ENCODE measurements at regions of chr20 and their contacts with region 1.

Region 1: GRCh38 chr20:561437-562231 is 18.0 kb upstream of the CSNK2A1 start:
- DNase-seq: no peak
- H3K4me3 ChIP-seq: no peak overlapping the region
- H3K27ac ChIP-seq: no peak overlapping the region
- H3K4me1 ChIP-seq: peaks cover 0 to 10% (median 1%) of the 10 kb centered on the region in 4 donors
- H3K27me3 ChIP-seq: peaks cover 0 to 78% (median 4%) of the 10 kb centered on the region in 4 donors
- CTCF ChIP-seq: peak; percentile 88 to 99 (median 89)
- EP300 ChIP-seq: no peak
- POLR2A ChIP-seq: no peak

Region 2: DNA sequence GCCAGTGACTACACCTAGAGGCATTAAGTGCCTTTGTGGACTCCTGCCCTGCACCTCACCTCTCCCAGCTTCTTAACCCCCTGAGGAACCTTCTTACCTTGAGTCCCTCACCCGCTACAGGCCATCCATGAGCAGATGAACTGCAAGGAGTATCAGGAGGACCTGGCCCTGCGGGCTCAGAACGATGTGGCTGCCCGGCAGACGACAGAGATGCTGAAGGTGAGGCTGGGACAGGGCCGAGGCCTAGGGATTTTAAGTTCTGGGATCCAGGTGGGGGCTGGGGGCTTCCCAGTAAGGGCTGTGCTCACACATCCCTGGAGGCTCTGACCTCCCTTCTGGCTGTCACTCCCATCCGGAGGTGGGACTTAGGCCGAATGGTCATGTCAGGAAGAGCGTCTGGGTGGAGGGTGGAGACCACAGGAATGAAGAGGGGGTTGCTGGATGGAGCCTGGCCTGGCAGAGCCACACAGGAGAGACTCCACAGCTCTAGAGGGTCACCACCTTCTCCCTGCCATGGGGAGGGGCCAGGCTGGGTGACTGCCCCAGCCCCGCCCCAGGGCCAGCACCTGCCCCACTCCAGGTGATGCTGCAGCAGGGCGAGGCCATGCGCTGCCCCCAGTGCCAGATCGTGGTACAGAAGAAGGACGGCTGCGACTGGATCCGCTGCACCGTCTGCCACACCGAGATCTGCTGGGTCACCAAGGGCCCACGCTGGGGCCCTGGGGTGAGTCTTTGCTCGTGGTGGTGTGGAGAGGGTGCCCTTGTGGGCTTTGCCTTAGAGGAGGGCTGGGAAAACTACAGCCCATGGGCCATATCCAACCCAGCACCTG is 133.0 kb before region 1 on chr20:
- intact Hi-C with region 1: no loop called
- DNase-seq: no peak
- H3K4me3 ChIP-seq: no peak overlapping the region
- H3K27ac ChIP-seq: no peak overlapping the region
- H3K4me1 ChIP-seq: peaks cover 0 to 10% (median 0%) of the 10 kb centered on the region in 4 donors
- H3K27me3 ChIP-seq: no peaks in the 10 kb centered on the region
- CTCF ChIP-seq: no peak
- EP300 ChIP-seq: no peak
- POLR2A ChIP-seq: no peak

Region 3: DNA sequence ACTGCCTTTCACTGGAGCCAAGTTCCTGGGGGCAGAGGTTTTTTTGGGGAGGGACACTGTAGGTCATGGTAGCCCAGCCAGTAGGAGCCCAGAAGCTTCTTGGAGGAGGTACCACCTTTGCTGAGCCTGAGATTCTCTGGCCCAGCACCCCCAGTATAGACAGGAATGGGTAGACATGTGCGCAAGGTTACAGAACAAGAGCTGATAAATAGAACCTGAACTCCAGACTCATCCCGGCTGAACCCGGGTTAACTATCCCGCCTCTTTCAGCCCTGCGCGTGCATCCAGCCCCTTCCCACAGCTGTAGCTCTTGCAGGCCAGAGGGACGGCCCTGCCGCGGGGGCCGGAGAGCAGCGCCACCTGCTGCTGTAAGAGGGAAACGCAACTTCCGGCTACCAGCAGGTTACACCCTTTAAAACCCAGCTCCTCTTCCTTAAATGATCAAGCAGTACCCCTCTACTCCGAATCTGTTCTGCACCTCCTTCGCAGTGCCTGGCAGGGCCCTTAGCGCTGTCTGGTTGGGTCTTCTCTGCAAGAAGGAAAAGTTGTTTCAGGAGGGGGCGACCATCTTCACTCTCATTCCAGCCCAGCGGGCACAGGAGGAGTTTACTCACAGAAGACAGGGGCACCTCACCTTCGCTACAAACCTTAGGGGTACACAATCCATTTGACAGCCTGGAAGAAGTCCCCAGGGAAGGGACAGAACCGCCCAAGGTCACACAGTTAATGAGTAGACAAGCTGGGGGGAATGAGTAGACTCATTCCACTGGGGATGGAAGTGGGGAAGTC is 83.9 kb after region 1 on chr20:
- intact Hi-C with region 1: loop called (anchors 5 kb)
- DNase-seq: no peak
- H3K4me3 ChIP-seq: no peak overlapping the region
- H3K27ac ChIP-seq: no peak overlapping the region
- H3K4me1 ChIP-seq: peaks cover 15 to 29% (median 25%) of the 10 kb centered on the region in 4 donors
- H3K27me3 ChIP-seq: peaks cover 0 to 24% (median 9%) of the 10 kb centered on the region in 4 donors
- CTCF ChIP-seq: peak; percentile 78 to 94 (median 84)
- EP300 ChIP-seq: no peak
- POLR2A ChIP-seq: no peak

Region 4: GRCh38 chr20:667391-667964 is 105.8 kb after region 1 on chr20:
- intact Hi-C with region 1: loop called (anchors 5 kb)
- DNase-seq: no peak
- H3K4me3 ChIP-seq: no peak overlapping the region
- H3K27ac ChIP-seq: no peak overlapping the region
- H3K4me1 ChIP-seq: peaks cover 5 to 22% (median 7%) of the 10 kb centered on the region in 4 donors
- H3K27me3 ChIP-seq: peaks cover 0 to 97% (median 48%) of the 10 kb centered on the region in 4 donors
- CTCF ChIP-seq: peak; percentile 66 to 78 (median 67)
- EP300 ChIP-seq: no peak
- POLR2A ChIP-seq: no peak

Region 5: GRCh38 chr20:739736-740135 is 178.1 kb after region 1 on chr20:
- intact Hi-C with region 1: loop called (anchors 2 kb)
- DNase-seq: no peak
- H3K4me3 ChIP-seq: no peak overlapping the region
- H3K27ac ChIP-seq: no peak overlapping the region
- H3K4me1 ChIP-seq: no peaks in the 10 kb centered on the region
- H3K27me3 ChIP-seq: peaks cover 0 to 46% (median 0%) of the 10 kb centered on the region in 4 donors
- CTCF ChIP-seq: no peak
- EP300 ChIP-seq: no peak
- POLR2A ChIP-seq: no peak

Measured in esophagus muscularis mucosa (tissue), 4 donors.